ENCODE measurements at regions of chr19 and their contacts with region 1.

Region 1: GRCh38 chr19:48333467-48334384 is 8.4 kb downstream of the EMP3 start:
- DNase-seq: peak; percentile 96
- ATAC-seq: peak; percentile 71
- H3K4me3 Mint-ChIP-seq: peak overlapping the region; percentile 87
- H3K27ac Mint-ChIP-seq: peak overlapping the region; percentile 96
- H3K4me1 Mint-ChIP-seq: peaks cover 50% of the 10 kb centered on the region
- H3K27me3 Mint-ChIP-seq: no peaks in the 10 kb centered on the region
- CTCF ChIP-seq: peak; percentile 74

Region 2: DNA sequence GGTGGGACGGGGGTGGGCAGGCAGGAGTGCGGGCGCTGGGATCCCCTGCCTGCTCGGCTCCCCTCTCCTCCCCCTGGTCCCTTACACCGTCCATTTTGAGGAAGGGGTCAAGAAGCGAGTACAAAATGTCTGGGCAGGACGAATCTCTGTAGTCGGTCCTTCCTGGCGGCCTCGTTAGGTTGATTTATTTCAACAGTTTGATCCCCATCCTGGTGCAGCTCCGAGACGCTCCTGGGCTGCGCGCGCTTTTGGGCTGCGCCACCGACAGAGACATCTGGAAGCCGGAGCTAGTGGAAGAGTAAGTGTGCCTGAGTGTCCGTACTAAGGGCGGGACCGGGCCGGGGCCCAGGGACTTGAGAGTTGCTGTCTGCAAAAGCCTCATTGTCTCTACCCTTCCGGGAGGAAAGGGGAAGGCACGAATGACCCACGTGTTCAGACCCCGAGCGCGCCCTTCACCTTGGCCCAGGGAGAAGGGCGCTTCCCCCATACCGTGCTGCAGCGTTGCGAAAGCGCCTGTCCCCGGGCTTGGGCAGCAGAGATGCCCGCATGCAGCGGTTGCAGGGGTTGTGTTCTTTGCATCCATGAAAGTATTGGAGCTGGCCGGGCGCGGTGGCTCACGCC is 62.1 kb before region 1 on chr19:
- CTCF ChIA-PET with region 1: interaction called, 27 read pairs
- POLR2A ChIA-PET with region 1: no interaction called
- intact Hi-C with region 1: no loop called
- DNase-seq: peak; percentile 35
- ATAC-seq: peak; percentile 60
- H3K4me3 Mint-ChIP-seq: peak overlapping the region; percentile 74
- H3K27ac Mint-ChIP-seq: no peak overlapping the region
- H3K4me1 Mint-ChIP-seq: peaks cover 12% of the 10 kb centered on the region
- H3K27me3 Mint-ChIP-seq: peaks cover 11% of the 10 kb centered on the region
- CTCF ChIP-seq: no peak

Region 3: DNA sequence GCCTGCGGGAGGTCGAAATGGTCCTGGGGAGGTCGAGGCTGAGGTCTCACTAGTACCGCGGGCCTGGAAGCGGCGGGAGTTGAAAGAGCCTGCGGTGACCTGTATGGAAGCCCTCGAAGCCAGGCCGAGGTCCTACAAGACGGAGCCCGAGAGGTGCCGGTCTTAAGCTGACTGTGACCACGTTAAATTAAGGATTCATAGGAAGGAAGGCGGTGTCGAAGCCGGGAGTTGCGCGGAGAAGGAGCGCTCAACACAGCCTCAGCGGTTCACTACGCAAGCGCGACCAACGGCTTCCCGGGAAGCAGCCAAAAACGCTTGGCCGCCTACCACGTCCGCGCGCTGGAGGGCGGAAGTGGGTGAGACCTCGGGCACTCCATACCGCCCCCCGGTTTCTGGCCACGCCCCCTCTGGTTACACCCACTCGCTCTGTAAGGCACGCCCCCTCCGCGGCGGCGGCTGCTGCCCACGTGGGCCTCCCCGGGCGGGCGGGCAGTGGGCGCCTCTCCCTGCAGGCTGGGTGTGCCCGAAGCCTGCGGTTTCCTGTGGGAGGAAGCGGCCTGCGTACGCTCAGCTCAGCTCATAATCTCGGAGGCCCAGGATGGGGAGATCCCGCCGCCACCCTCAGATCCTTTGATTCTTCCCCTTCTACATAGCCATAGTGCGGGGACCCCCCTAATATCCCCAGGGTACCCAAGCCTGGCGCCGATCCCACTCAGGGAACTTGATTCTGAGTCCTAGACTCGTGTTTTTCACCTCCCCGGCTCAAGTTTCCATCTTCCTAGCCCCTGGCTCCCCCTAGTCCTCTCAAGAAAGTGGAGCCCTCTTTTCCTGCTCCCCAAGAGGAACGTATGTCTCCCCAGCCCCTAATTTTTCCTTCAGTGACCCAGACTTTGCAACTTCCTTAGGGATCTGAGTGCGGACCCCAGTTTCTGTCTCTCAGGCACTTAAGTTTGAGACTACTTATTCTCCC is 11.8 kb before region 1 on chr19:
- CTCF ChIA-PET with region 1: interaction called, 247 read pairs
- POLR2A ChIA-PET with region 1: interaction called, 47 read pairs
- intact Hi-C with region 1: loop called (anchors 2 kb)
- DNase-seq: peak; percentile 98
- ATAC-seq: peak; percentile 65
- H3K4me3 Mint-ChIP-seq: peak overlapping the region; percentile 82
- H3K27ac Mint-ChIP-seq: peak overlapping the region; percentile 96
- H3K4me1 Mint-ChIP-seq: peaks cover 51% of the 10 kb centered on the region
- H3K27me3 Mint-ChIP-seq: no peaks in the 10 kb centered on the region
- CTCF ChIP-seq: no peak

Region 4: DNA sequence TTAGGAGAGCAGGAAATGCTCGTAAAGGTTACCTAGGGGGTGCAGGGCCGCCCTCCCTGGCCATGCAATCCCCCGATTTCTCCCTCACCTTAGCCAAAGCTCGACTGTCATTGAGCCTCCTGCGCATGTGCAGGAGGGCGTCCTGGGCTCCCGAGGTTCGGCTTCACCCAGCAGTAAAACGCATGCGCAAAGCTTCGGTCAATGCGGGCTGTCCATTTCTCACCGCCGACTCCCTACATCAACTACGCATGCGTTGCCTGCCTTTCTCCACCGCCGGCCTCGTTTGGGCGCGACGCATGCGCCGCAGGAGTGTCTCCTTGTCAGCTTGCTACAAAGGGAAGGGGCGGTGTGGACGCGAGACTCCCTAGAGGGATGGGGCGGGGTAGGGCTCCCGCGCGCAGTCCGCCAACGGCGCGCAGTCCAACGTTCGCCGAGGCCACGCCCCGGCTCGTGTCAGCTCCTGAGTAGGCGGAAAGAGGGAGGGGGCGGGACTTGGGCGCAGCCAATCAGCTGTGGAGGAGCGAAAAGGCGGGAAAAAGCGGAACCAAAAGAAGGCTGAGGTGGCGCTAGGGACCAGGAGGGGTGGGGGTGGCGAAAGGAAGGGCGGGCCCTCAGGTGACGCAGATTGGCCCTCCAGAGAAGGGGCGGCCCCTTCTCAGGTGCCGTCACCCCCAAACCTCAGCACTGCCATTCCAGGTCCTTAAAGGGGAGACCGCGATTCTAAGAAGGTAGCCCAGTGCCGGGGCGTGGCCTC is 30.3 kb after region 1 on chr19 and contains the starts of genes SYNGR4 and TMEM143:
- CTCF ChIA-PET with region 1: interaction called, 14 read pairs
- POLR2A ChIA-PET with region 1: interaction called, 5 read pairs
- intact Hi-C with region 1: no loop called
- DNase-seq: peak; percentile 97
- ATAC-seq: peak; percentile 91
- H3K4me3 Mint-ChIP-seq: peak within 1 kb of the TSS; percentile 86
- H3K27ac Mint-ChIP-seq: peak within 1 kb of the TSS; percentile 96
- H3K4me1 Mint-ChIP-seq: peaks cover 10% of the 10 kb centered on the region
- H3K27me3 Mint-ChIP-seq: no peaks in the 10 kb centered on the region
- CTCF ChIP-seq: no peak
- total RNA-seq, gene SYNGR4: 0.38 TPM in 1 of 2 experiments, not detected in the other
- total RNA-seq, gene TMEM143: 19.4 to 21.7 TPM

Measured in activated CD8-positive, alpha-beta T cell treated with anti-CD3 and anti-CD28 coated beads for 36 hours (primary cell).